ENCODE measurements at regions of chr1 and their contacts with region 1.

Region 1: GRCh38 chr1:104702731-104703130 is 953.0 kb downstream of the AMY1C start:
- DNase-seq: no peak
- H3K4me3 ChIP-seq: no peak overlapping the region
- H3K27ac ChIP-seq: no peak overlapping the region
- H3K4me1 ChIP-seq: no peaks in the 10 kb centered on the region
- CTCF ChIP-seq: no peak

Region 2: GRCh38 chr1:104309673-104310072 is 393.1 kb before region 1 on chr1:
- CTCF ChIA-PET with region 1: no interaction called
- POLR2A ChIA-PET with region 1: interaction called, 10 read pairs
- intact Hi-C with region 1: no loop called
- DNase-seq: no peak
- H3K4me3 ChIP-seq: no peak overlapping the region
- H3K27ac ChIP-seq: no peak overlapping the region
- H3K4me1 ChIP-seq: no peaks in the 10 kb centered on the region
- CTCF ChIP-seq: no peak

Region 3: GRCh38 chr1:105017587-105017986 is 314.9 kb after region 1 on chr1:
- CTCF ChIA-PET with region 1: no interaction called
- POLR2A ChIA-PET with region 1: no interaction called
- intact Hi-C with region 1: no loop called
- DNase-seq: no peak
- H3K4me3 ChIP-seq: no peak overlapping the region
- H3K27ac ChIP-seq: no peak overlapping the region
- H3K4me1 ChIP-seq: no peaks in the 10 kb centered on the region
- CTCF ChIP-seq: no peak